Heart right ventricle (tissue), 16 donors: ENCODE measurements at regions of chr12 and their contacts with region 1.

Region 1: DNA sequence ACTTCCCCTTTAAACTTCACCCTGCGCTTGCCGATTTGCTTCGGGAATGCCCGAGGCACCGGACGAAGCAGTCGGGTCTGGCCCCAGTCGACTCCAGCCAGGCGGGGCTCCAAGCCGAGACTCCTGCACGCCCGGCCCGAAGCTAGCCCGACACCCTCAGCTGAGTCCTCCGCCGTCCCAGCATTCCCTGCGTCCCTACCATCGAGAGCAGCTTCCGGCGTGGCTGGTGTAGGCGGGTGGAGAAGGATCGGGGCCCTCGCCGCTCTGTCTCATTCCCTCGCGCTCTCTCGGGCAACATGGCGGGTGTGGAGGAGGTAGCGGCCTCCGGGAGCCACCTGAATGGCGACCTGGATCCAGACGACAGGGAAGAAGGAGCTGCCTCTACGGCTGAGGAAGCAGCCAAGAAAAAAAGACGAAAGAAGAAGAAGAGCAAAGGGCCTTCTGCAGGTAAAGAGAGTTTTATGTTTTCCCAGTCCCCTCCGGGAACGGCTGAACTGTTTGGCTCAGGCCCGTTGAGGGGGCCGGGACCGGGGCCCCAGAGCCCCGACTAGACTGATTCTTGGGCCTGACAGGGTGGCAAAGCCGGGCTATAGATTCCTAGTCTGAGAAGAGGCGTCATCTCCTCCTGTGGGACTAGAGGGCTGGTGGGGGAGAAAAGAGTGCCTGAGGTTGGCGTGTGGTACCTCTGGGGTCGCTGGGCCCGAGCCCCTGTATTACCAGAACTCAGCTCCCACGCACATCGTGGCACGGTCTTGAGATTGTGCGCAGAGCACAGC is at the start of gene METAP2:
- DNase-seq: peak; percentile 95 to 97
- ATAC-seq: peak; percentile 99 to 100 (median 100)
- H3K4me3 ChIP-seq: peak within 1 kb of the TSS; percentile 68 to 96 (median 90)
- H3K27ac ChIP-seq: peak within 1 kb of the TSS; percentile 78 to 97 (median 95)
- H3K4me1 ChIP-seq: peaks cover 0 to 38% (median 27%) of the 10 kb centered on the region in 9 donors
- H3K27me3 ChIP-seq: no peaks in the 10 kb centered on the region
- CTCF ChIP-seq: no peak
- total RNA-seq, gene METAP2: 48.8 to 68.7 (median 58.4) TPM

Region 2: DNA sequence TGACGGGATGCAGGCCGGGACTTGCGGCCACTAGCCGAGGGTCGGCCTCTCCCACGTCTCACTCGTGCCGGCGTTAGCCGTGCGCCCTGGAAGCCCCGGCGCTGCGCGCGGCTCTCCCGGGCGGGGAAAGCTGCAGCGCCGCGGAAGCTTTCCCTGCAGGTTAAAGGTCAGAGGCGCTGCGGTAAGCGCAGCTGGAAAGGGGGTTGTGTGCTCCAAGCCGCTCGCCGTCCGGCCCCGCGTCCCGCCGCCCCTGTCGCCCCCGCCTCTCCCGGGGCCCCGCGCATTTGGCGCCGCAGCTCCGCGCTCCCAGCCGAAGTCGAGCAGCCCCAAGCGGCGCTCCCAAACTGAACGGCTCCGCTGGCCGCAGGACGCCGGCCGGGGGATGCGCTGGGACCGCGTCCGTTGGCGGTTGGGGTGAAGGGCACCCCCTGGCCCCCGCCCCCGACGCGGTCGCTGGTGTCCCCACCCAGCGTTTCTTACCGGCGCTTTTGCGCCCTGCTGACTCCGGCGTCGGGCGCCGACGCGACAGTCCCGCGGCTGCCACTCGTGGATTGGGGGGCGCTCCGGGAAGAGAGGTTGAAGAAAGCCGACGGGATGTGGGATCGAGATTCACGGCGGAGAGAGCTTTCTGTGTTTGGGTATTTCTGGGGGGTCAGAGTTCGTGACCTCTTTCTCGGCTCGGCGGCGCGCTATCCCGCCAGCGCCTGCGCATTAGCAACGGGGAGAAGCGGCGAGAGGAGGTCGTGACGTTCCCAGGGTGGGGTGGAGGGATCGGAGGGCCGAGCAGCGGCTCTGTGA is 401.0 kb before region 1 on chr12 and contains the start of gene NR2C1:
- intact Hi-C with region 1: loop called in 1 of 10 experiments (anchors 10 kb)
- DNase-seq: peak; percentile 92 to 96
- ATAC-seq: peak; percentile 96 to 99 (median 98)
- H3K4me3 ChIP-seq: peak within 1 kb of the TSS; percentile 72 to 100 (median 96)
- H3K27ac ChIP-seq: peak within 1 kb of the TSS; percentile 62 to 97 (median 92)
- H3K4me1 ChIP-seq: peaks cover 0 to 45% (median 9%) of the 10 kb centered on the region in 9 donors
- H3K27me3 ChIP-seq: no peaks in the 10 kb centered on the region
- CTCF ChIP-seq: no peak
- total RNA-seq, gene NR2C1: 33.6 to 46.0 (median 38.3) TPM

Region 3: GRCh38 chr12:95385246-95386035 is 88.6 kb before region 1 on chr12:
- intact Hi-C with region 1: loop called in 2 of 10 experiments (anchors 1 to 10 kb)
- DNase-seq: peak in 1 of 2 donors; percentile 6
- ATAC-seq: peak; percentile 84 to 96 (median 92)
- H3K4me3 ChIP-seq: peak overlapping the region in 9 of 10 donors; percentile 24 to 57 (median 44)
- H3K27ac ChIP-seq: peak overlapping the region; percentile 65 to 86 (median 76)
- H3K4me1 ChIP-seq: peaks cover 3 to 28% (median 13%) of the 10 kb centered on the region in 9 donors
- H3K27me3 ChIP-seq: no peaks in the 10 kb centered on the region
- CTCF ChIP-seq: no peak

Region 4: DNA sequence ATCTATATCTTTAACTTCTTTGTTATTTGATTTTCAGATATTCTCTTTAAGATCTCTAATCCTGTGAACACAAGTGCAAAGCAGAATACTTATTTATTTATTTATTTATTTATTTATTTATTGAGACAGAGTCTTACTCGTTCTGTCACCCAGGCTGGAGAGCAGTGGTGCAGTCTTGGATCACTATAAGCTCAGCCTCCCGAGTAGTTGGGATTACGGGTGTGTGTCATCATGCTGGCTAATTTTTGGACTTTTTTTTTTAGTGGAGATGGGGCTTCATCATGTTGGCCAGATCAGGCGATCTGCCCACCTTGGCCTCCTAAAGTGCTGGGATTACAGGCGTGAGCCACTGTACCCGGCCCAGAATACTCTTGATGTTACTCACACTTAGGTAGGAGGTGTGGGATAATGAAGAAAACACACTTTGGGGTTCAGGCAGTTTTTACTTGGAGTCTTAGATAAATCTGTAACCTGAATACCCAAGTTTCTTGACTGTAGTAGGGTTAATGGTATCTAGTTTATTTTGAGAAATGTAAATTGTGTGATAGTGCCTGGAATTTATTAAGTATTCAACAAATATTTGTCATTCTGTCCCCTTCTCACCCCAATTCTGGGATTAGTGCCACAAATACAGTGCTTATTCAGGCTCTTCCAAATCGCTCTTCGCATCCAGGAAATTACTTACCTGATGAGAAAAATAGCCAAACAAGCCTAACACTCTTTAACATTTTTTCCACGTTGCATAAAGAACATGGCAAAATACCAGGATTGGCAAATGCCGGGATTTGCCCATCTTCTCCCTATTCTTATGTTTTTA is 32.8 kb after region 1 on chr12:
- intact Hi-C with region 1: no loop called
- DNase-seq: no peak
- ATAC-seq: no peak
- H3K4me3 ChIP-seq: no peak overlapping the region
- H3K27ac ChIP-seq: no peak overlapping the region
- H3K4me1 ChIP-seq: no peaks in the 10 kb centered on the region
- H3K27me3 ChIP-seq: no peaks in the 10 kb centered on the region
- CTCF ChIP-seq: no peak